Natural killer cell (primary cell): ENCODE measurements at regions of chr5 and their contacts with region 1.

Region 1: DNA sequence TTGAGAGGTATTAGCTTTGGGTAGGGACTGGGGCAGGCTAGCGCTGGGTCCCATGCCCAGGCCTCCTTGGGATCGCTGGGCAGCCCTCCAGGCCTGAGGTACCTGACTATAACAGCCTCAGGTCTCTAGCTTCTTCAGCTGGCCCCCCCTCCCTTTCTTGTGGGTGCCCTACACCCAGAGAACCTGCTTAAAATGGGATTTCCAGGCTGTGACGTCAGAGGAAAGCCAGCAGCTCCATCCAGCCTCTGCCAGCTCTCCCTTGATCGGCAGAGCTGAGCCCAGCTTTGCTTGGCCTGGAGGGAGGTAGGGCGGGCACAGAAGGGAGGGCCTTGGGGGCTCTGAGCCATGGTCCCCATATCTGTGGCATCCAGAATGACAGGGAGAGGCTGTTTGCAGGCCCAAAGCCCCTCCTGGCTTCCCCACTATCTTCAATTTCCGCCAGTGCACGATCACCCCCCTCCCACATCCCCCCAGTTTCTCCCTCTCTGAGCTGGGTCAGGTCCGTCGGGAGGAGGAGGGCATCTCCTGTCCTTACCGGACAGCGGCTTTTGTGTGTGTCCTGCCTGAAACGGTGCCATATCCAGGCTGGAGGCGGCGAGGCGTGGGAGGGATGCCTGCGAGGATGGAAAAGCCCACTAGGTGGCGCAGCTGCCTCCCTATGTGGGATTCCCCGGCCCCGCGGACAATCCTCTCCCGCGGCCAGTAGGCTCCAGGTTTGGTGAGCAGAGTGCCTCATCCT is 10.8 kb downstream of the REEP2 start:
- DNase-seq: peak; percentile 81 to 88
- ATAC-seq: peak; percentile 84 to 99 (median 97)
- H3K4me3 ChIP-seq: no peak overlapping the region
- H3K4me3 Mint-ChIP-seq: no peak overlapping the region
- H3K27ac ChIP-seq: no peak overlapping the region
- H3K27ac Mint-ChIP-seq: peak overlapping the region; percentile 36 to 56
- H3K4me1 ChIP-seq: peaks cover 9% of the 10 kb centered on the region
- H3K4me1 Mint-ChIP-seq: peaks cover 5 to 6% of the 10 kb centered on the region in 2 donors
- H3K27me3 ChIP-seq: no peaks in the 10 kb centered on the region
- H3K27me3 Mint-ChIP-seq: peaks cover 0 to 4% of the 10 kb centered on the region in 2 donors
- CTCF ChIP-seq: peak; percentile 94

Region 2: DNA sequence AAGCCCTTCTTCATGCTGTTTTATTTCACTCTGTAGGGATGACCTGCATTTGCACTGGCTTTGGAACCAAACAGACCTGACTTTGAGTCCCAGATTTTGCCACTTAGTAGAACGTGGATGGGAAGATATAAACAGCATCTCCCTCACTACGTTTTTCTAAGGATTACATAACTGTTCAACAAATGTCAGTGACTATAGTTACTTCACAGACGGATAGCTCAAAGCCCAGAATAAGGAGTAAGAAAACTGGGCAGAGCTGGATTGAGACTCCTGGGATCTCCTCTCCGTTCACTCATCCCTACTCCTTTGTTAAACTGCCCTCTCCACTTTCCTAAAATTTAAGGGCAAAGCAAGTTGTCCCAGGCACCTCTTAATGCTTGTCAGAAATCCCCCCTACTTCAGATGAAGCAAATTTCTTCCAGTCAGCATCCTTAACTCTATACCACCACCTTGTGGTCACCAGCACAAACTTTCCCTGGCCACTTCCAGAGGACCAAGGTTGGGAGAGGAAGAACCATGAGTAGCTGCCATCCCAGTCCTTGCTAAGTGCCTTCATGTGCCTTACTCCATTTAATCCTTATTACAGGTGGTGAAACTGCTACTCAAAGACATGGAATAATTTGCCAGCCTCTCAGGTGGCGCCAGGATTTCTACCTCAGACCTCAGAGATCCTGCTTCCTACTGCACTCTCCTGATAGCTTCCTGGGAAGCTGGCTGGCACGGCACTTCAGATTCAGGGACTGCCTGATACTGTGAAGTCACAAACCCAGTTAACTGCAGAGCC is 54.0 kb after region 1 on chr5:
- intact Hi-C with region 1: loop called (anchors 1 kb)
- DNase-seq: peak in 1 of 2 donors; percentile 81
- ATAC-seq: peak; percentile 71 to 91 (median 78)
- H3K4me3 ChIP-seq: no peak overlapping the region
- H3K4me3 Mint-ChIP-seq: no peak overlapping the region
- H3K27ac ChIP-seq: no peak overlapping the region
- H3K27ac Mint-ChIP-seq: peak overlapping the region in 1 of 2 donors; percentile 44
- H3K4me1 ChIP-seq: no peaks in the 10 kb centered on the region
- H3K4me1 Mint-ChIP-seq: peaks cover 0 to 5% of the 10 kb centered on the region in 2 donors
- H3K27me3 ChIP-seq: no peaks in the 10 kb centered on the region
- H3K27me3 Mint-ChIP-seq: no peaks in the 10 kb centered on the region
- CTCF ChIP-seq: peak; percentile 64

Region 3: DNA sequence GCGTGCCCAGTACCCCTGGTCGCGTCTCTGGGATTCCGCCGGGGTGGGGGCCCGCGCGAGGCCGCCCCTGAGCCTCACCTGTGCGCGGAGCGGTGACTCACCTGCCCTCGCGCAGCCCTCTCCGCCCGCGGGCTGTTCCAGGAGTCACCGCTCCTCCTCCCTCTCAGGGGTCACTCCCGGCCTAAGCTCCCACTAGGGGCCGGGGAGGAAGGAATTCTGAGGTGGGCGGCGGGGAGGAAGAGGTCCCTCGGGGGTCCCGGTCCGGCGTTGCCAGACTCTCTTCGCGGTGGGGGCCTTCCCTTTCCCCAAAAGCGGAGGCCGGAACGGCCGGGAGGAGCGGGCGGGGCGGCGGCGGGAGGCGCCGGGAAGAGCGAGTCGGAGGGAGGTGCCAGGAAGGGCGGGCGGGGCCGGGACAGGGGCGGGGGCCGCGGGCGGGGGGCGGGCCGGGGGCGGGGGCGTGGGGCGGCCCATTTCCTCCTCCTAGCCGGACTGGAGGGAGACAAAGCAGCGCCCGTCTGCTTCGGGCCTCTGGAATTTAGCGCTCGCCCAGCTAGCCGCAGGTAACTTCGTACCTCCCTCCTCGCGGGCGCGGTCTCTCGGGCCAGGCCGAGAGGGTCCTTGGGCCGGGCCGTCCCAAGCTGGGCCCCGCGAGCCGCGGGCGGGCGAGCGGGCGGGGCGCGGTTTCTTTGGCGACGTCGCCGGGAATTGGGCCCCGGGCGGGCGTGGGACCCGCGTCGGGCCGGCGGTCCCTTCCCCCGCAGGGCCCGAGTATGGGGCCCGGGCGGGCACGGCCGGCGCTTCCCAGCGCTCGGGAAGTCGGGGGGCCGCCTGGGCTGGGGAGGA is 303.5 kb after region 1 on chr5 and contains the start of gene CTNNA1:
- intact Hi-C with region 1: no loop called
- DNase-seq: peak; percentile 31 to 59
- ATAC-seq: peak; percentile 74 to 81 (median 74)
- H3K4me3 ChIP-seq: peak within 1 kb of the TSS; percentile 65
- H3K4me3 Mint-ChIP-seq: peak within 1 kb of the TSS; percentile 86
- H3K27ac ChIP-seq: no peak within 1 kb of the TSS
- H3K27ac Mint-ChIP-seq: peak within 1 kb of the TSS in 1 of 2 donors; percentile 81
- H3K4me1 ChIP-seq: peaks cover 18% of the 10 kb centered on the region
- H3K4me1 Mint-ChIP-seq: peaks cover 27 to 34% of the 10 kb centered on the region in 2 donors
- H3K27me3 ChIP-seq: peaks cover 6% of the 10 kb centered on the region
- H3K27me3 Mint-ChIP-seq: peaks cover 8 to 19% of the 10 kb centered on the region in 2 donors
- CTCF ChIP-seq: no peak
- total RNA-seq, gene CTNNA1: 34.4 to 53.0 (median 49.8) TPM